Aorta (tissue), 5 donors: ENCODE measurements at regions of chr1 and their contacts with region 1.

Region 1: GRCh38 chr1:185500001-185500626 is 183.1 kb upstream of the IVNS1ABP start:
- DNase-seq: no peak
- ATAC-seq: no peak
- H3K4me3 ChIP-seq: no peak overlapping the region
- H3K27ac ChIP-seq: no peak overlapping the region
- H3K4me1 ChIP-seq: no peaks in the 10 kb centered on the region
- H3K27me3 ChIP-seq: no peaks in the 10 kb centered on the region

Region 2: DNA sequence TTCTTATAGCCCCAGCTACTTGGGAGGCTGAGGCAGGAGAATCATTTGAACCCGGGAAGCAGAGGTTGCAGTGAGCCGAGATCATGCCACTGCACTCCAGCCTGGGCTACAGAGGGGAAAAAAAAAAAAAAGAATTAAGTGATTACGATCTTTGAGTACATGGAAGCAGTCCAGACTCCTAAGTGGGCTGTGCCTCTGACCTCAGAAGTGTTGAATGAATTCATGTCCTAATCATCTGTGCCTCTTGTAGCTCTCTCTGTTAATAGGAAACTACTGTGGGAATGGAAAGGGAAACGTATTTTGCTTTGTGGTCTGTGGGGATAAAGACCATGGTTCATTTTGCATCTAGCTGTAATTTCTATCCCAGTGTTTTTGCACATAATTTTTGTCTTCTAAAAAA is 174.7 kb before region 1 on chr1:
- intact Hi-C with region 1: no loop called
- DNase-seq: no peak
- ATAC-seq: no peak
- H3K4me3 ChIP-seq: no peak overlapping the region
- H3K27ac ChIP-seq: no peak overlapping the region
- H3K4me1 ChIP-seq: no peaks in the 10 kb centered on the region
- H3K27me3 ChIP-seq: no peaks in the 10 kb centered on the region

Region 3: DNA sequence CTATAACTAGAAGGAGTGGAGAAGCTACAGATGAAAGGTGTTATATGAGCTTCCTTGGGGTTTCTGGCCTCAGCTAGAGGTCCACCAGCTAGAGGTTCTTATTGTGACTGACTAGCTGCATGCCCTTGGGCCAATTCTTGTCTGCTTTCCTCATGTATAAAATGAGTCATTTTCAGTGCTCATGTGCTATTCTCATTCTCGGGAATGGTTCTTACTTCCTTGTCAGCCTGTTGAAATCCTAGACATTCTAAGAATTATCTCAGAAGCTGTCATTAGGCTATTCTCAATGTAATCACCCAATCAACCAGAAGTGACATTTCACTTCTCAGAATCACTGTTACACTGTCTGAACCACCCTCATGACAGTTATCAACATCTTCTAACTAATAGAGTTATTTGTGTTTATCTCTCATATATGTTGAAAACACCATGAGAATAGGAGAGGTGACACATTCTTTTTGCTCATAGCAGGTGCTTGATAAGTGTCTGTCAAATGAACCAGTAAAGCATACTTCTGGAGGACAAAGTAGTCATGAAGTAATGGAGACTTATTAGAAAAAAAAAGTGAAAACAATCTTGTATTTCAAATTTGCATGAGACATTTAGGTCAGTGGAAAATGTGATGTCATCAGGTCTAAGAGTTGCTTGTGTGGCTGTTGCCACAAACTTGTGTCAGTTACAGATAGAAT is 60.2 kb before region 1 on chr1:
- intact Hi-C with region 1: no loop called
- DNase-seq: no peak
- ATAC-seq: no peak
- H3K4me3 ChIP-seq: no peak overlapping the region
- H3K27ac ChIP-seq: no peak overlapping the region
- H3K4me1 ChIP-seq: peaks cover 0 to 2% of the 10 kb centered on the region in 2 donors
- H3K27me3 ChIP-seq: no peaks in the 10 kb centered on the region

Region 4: DNA sequence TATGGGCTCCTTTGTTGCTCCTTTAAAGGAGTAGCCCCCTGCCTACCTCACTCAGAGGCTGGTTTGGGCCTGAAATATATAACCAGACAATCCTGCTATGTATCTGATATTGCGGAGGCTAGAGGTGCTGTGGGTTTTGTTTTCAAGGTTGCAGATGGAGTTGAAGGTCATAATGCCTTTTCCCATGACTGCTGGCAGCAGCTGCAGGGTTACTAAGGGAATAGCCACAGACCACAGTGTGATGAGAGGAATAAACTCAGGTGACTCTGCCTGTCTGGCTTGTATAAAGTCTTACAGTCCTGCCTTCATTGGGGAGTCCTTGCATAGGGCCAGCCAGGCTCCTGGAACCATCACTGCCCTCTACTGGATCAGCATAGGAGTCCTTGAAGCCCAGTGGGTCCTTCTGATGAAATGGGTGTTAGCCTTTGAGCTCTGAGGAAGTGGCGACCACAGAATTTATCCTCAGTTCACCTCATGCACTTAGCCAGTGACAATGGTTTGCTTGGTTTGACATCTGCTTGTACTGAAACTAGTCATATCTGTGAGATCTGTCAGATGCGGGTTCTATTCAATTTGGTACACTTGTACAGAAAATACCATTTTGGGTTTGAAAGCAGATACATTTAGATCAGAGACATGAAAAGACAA is 59.7 kb after region 1 on chr1:
- intact Hi-C with region 1: loop called in 1 of 2 experiments (anchors 10 kb)
- DNase-seq: peak in 1 of 2 donors; percentile 51
- ATAC-seq: peak; percentile 44
- H3K4me3 ChIP-seq: no peak overlapping the region
- H3K27ac ChIP-seq: no peak overlapping the region
- H3K4me1 ChIP-seq: no peaks in the 10 kb centered on the region
- H3K27me3 ChIP-seq: no peaks in the 10 kb centered on the region